ENCODE measurements at regions of chr2 and their contacts with region 1.

Region 1: DNA sequence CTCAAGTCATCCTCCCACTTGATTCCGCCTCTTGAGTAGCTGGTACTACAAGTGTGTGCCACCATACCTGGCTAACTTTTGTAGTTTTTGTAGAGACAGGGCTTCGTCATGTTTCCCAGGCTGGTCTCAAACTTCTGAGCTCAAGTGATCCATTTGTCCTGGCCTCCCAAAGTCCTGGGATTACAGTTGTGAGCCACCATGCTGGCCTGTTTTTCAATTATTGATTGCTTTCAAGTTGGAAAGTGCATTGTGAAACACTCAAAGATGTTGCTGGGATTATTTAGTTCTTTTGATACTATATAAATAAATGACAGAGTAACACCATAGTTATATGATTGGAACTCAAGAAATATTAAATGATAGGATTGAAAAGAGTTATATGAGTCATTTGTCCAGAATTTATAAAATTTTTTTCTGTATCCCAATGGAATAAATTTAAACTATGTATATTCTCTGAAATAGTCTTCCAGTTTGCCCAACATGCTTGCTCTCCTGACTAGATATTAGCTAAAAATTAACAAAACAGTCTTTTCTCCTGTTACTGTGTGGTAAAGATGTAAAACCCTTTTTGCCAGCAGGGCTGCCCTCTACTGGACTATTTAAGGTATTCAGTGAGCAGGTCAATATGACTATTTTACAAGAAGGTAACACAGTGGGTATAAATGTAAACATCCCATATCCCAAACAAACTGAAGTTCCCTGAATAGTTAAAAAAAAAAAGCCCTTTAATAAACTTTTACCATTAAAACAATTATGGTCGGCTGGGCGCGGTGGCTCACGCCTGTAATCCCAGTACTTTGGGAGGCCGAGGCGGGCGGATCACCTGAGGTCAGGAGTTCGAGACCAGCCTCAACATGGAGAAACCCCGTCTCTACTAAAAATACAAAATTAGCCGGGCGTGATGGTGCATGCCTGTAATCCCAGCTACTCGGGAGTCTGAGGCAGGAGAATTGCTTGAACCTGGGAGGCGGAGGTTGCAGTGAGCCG is 42.7 kb downstream of the ACSL3 start:
- DNase-seq: peak in 1 of 10 donors; percentile 27

Region 2: GRCh38 chr2:222797261-222797660 is 106.3 kb before region 1 on chr2:
- intact Hi-C with region 1: loop called (anchors 10 kb)
- DNase-seq: no peak

Measured in posterior cingulate gyrus (tissue), 11 donors.